Ovary (tissue), 10 donors: ENCODE measurements at regions of chr1 and their contacts with region 1.

Region 1: GRCh38 chr1:155084722-155085503 is 6.3 kb downstream of the EFNA3 start:
- DNase-seq: peak; percentile 86 to 92 (median 90)
- H3K4me3 ChIP-seq: peak overlapping the region; percentile 61
- H3K27ac ChIP-seq: peak overlapping the region; percentile 66 to 69
- H3K4me1 ChIP-seq: peaks cover 14% of the 10 kb centered on the region
- H3K27me3 ChIP-seq: peaks cover 16% of the 10 kb centered on the region
- CTCF ChIP-seq: peak; percentile 92 to 98 (median 97)
- EP300 ChIP-seq: no peak
- POLR2A ChIP-seq: peak; percentile 10

Region 2: GRCh38 chr1:155017041-155017945 is 67.6 kb before region 1 on chr1:
- intact Hi-C with region 1: no loop called
- DNase-seq: peak; percentile 89 to 97 (median 95)
- H3K4me3 ChIP-seq: peak overlapping the region; percentile 31
- H3K27ac ChIP-seq: peak overlapping the region; percentile 79 to 81
- H3K4me1 ChIP-seq: peaks cover 6% of the 10 kb centered on the region
- H3K27me3 ChIP-seq: no peaks in the 10 kb centered on the region
- CTCF ChIP-seq: peak; percentile 96 to 100 (median 99)
- EP300 ChIP-seq: peak; percentile 41
- POLR2A ChIP-seq: peak; percentile 62

Region 3: DNA sequence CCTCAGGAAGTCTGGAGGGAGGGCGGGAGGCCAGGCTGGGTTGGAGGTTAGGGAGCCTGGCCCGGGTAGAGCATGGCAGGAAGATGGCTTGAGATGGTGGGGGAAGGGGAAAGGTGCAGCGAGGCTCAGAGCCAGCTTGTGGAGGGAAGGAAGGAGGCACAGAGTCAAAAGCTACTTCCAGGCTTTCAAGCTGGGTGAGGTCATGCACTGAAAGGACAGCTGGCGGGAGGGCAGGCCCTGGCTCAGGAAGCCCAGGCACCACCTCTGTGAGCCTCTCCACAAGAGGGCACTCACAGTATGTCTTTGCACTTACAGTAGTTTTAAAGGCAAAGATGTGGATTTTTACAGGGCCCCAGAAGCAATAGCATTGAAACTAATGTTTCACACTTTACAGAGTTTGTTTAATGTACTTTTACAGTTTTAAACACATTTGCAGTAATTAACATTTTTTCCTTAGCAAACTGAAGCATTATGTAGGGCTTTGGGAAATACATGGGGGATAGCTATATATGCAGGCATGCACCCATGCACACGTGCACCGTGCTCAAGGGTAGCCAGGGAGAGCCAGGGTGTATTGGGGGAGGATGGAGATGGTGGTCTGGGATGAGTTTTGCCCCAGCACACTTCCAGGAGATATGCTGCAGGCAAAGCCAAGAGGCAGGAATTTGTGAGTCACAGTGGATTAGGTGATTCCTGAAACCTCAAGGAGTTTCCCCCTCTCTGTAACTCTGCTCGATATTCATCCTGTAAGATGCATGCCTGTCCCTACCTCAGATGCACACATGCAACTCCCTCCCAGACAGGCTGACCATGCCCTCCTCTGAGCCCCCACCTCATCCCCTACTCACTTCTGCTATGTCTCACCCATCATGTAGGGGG is 39.9 kb before region 1 on chr1:
- intact Hi-C with region 1: loop called in 1 of 4 experiments (anchors 5 kb)
- DNase-seq: peak in 4 of 5 donors; percentile 45 to 61 (median 54)
- H3K4me3 ChIP-seq: no peak overlapping the region
- H3K27ac ChIP-seq: no peak overlapping the region
- H3K4me1 ChIP-seq: no peaks in the 10 kb centered on the region
- H3K27me3 ChIP-seq: no peaks in the 10 kb centered on the region
- CTCF ChIP-seq: peak in 2 of 3 donors; percentile 28 to 36
- EP300 ChIP-seq: no peak
- POLR2A ChIP-seq: no peak

Region 4: DNA sequence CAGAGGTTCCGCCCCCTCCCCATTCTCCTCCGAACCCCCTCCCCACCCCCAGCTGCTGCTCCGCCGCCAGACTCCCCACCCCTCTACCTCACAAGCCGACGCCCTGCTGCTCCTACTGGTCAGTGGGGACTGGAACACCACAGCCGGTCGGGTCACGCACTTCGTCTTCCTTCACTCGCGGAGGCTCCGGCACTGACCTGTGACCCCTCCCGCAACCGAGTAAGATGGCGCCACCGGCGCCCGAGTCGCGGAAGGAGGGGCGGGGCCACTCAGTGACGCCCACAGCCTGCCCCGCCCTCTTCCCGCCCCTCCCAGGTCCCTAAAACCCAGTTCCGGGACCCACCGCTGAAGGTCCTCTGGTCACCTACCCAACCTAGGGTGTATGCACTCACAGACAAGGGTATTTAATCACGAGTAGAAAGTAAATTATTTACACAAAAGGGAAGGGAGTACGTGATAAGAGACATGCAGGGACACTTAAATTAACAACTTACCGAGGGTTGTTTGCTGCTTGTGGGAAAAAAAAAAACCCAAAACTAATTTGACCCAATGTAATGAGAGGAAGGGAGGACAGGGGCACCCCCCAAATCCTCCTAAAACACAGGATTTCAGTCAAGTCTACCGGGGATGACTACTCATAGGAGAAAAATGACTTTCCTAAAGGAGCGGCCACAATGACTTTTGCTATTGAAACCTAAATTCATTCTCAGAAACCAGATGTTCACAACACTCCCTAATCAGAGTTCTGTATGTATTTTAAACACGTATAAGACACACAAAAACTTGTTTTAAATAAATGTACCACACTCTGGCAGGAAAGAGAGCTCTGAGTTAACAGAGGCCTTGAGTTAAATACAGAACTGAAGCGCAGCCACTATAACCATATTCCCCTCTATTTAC is 826.5 kb after region 1 on chr1 and contains the start of gene RIT1:
- intact Hi-C with region 1: no loop called
- DNase-seq: peak; percentile 84 to 91 (median 89)
- H3K4me3 ChIP-seq: peak within 1 kb of the TSS; percentile 69
- H3K27ac ChIP-seq: peak within 1 kb of the TSS; percentile 76 to 93
- H3K4me1 ChIP-seq: no peaks in the 10 kb centered on the region
- H3K27me3 ChIP-seq: no peaks in the 10 kb centered on the region
- CTCF ChIP-seq: peak in 1 of 3 donors; percentile 21
- EP300 ChIP-seq: no peak
- POLR2A ChIP-seq: peak; percentile 59
- total RNA-seq, gene RIT1: 10.9 to 26.9 (median 23.0) TPM